ENCODE measurements at regions of chr5 and their contacts with region 1.

Region 1: GRCh38 chr5:135750506-135750905 is 84.0 kb upstream of the SLC25A48 start:
- H3K4me3 Mint-ChIP-seq: no peak overlapping the region
- H3K27ac Mint-ChIP-seq: no peak overlapping the region
- H3K4me1 Mint-ChIP-seq: no peaks in the 10 kb centered on the region
- H3K27me3 Mint-ChIP-seq: peaks cover 12% of the 10 kb centered on the region

Region 2: DNA sequence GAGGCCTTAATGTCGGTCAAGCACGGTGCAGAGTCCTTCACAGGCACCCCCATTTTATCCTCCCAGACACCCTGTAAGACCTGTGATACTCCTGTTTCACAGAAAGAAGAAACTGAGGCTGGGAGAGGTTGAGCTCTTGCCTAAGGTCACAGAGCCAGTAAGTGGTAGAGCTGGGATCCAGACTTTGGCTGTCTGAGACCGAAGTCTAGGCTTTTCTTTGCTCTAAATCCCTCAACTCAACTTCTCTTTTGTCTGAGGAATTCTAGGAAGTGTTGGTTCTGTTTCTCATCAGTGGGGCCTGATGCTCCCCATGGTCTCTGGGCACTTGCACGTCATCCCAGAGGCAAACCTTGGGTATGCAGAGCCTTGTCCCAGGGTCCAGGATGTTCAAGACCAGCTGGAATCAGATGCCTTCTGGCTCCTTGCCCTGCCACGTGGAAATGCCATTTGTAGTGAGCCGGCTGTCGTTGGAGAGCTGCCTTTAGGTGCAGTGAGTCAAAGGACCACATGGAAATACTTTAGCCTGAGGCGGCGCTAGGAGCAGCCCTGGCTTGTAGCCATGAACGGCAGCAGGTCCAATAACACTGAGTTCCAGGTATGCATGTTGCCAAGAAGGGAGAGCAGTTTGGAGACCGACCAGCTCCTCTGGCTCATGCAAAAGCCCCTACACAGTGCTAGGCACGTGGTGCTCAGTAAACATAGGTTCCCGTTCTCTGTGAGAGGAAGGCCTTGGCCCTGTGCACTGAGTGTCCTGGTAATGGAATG is 312.5 kb before region 1 on chr5:
- intact Hi-C with region 1: no loop called
- H3K4me3 Mint-ChIP-seq: peak overlapping the region; percentile 36
- H3K27ac Mint-ChIP-seq: peak overlapping the region; percentile 91
- H3K4me1 Mint-ChIP-seq: peaks cover 93% of the 10 kb centered on the region
- H3K27me3 Mint-ChIP-seq: no peaks in the 10 kb centered on the region

Region 3: DNA sequence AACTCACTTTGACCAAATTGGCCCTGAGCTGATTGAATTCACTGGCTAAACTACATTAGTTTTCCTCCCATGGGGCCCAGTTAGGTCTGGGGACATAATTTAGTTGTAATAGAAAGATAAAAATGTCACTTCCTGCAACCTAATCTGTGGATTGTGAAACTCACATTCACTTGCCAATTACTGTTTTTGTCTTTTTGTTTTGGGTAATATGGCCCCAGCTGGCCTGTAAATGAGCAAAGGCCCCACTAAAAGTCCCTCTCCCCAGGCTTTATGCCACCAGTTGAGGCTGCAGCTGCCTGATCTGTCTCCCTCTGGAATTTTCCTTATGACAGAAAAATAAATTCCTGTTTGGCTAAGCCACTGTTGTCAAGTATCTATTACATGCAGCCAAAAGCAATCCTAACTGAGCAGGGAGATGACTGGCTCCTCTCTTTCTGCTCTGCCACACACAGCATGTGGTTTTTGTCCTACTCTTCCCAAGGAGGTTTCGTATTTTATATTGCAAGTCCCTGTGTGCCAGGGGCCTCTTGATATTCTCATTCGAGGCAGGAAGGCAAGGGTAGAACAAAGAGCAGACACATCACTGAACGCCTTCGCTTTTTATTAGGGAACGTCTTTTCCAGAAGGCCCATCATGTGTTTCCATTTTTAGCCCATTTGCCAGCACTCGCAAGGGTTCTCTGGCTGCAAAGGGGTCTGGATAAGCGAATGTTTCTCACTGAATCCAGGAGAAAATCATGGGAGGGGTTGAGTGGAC is 59.9 kb after region 1 on chr5:
- intact Hi-C with region 1: loop called (anchors 5 kb)
- H3K4me3 Mint-ChIP-seq: no peak overlapping the region
- H3K27ac Mint-ChIP-seq: no peak overlapping the region
- H3K4me1 Mint-ChIP-seq: no peaks in the 10 kb centered on the region
- H3K27me3 Mint-ChIP-seq: peaks cover 12% of the 10 kb centered on the region

Measured in dendritic cell treated with granulocyte-macrophage colony-stimulating factor and Interleukin-4, amounts not matched to agents 40 ng/mL and 50 ng/mL, for 4 days (primary cell).